ENCODE measurements at regions of chr11 and their contacts with region 1.

Region 1: DNA sequence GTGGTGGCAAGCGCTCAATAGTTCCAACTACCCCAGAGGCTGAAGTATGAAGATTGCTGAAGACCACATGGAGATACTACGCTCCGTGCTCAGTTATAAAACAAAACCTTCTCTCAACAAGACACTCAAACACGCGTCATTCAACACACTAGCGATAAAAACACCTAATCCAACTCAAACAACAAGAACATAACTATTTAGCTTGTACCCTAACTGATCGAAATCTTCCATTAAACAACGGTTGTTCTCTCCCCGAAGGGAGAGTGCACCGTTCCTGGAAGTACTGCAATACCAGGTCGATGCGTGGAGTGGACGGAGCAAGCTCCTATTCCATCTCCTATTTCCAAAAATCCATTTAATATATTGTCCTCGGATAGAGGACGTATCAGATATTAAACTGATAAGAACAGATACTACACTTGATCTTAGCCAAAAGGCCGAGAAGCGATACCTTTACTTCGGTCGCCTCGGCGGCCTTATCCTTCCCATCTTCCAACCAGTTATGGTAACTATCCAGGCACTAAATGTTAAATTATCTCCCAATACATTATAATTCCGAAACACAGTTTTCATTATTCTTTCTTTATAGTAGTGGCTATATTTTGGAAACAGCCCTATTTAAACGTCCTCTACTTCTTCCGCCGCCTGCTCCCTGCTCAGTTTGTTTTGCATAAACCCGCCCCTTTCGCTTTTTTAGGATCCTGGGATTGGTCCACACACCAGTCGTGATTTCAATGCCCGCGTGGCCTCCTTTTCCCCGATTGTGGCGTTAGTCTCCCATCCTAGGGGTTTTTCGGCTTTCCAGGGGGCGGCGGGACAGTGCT is 2.2 kb upstream of the WDR74 start:
- DNase-seq: peak; percentile 81
- ATAC-seq: peak; percentile 69
- H3K4me3 Mint-ChIP-seq: no peak overlapping the region
- H3K27ac Mint-ChIP-seq: no peak overlapping the region
- H3K4me1 Mint-ChIP-seq: peaks cover 20% of the 10 kb centered on the region
- H3K27me3 Mint-ChIP-seq: no peaks in the 10 kb centered on the region

Region 2: GRCh38 chr11:62621567-62622470 is 219.8 kb before region 1 on chr11 and contains the start of gene B3GAT3:
- POLR2A ChIA-PET with region 1: interaction called, 10 read pairs
- DNase-seq: peak; percentile 94
- ATAC-seq: peak; percentile 87
- H3K4me3 Mint-ChIP-seq: peak within 1 kb of the TSS; percentile 93
- H3K27ac Mint-ChIP-seq: peak within 1 kb of the TSS; percentile 99
- H3K4me1 Mint-ChIP-seq: peaks cover 24% of the 10 kb centered on the region
- H3K27me3 Mint-ChIP-seq: no peaks in the 10 kb centered on the region
- total RNA-seq, gene B3GAT3: 76.1 to 87.0 TPM

Region 3: DNA sequence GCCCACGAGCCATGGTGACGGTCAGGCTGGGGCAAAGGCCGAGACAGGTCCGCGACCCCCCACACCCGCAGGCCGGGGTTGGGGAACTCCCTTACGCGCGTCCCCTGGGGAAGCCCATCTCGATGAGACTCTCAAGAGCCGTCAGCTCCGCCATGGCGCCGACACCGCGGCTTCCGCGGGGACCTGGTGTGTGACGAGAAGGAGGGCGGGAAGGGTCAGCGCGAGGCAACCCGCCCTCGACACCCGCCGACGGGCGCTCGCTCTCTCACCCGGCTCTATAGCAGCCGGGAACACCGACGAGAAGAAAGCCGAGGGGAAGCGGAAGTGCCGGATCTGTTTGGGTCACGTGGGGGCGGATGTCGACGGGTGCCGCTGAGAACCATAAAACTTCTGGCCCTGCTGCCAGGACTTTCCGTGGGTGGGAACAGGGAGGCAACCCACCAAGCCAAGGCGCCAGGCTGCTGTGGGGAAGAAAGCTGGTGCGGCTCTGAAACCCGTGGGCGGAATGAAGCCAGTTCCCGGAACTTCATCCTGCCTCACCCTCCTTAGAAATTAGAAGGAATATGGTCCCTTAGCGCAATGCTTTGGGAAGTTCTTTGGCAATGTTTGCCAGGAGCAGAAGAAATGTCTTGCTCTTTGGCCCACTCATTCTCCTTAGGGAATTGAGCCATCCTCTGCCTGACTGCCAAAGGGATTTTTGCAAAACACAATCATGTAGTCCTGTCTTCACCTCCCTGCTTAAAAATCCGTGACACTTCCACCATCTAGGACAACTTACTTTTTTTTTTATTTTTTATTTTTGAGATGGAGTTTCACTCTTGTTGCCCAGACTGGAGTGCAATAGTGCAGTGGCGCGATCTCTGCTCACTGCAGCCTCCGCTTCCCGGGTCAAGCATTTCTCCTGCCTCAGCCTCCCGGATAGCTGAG is 162.5 kb before region 1 on chr11 and contains the start of gene UBXN1:
- POLR2A ChIA-PET with region 1: interaction called, 10 read pairs
- DNase-seq: peak; percentile 82
- ATAC-seq: peak; percentile 79
- H3K4me3 Mint-ChIP-seq: peak within 1 kb of the TSS; percentile 85
- H3K27ac Mint-ChIP-seq: peak within 1 kb of the TSS; percentile 88
- H3K4me1 Mint-ChIP-seq: peaks cover 20% of the 10 kb centered on the region
- H3K27me3 Mint-ChIP-seq: no peaks in the 10 kb centered on the region
- total RNA-seq, gene UBXN1: 135 to 136 TPM

Region 4: GRCh38 chr11:62771144-62772021 is 70.2 kb before region 1 on chr11 and contains the start of gene TAF6L:
- POLR2A ChIA-PET with region 1: interaction called, 46 read pairs
- DNase-seq: peak; percentile 95
- ATAC-seq: peak; percentile 83
- H3K4me3 Mint-ChIP-seq: peak within 1 kb of the TSS; percentile 92
- H3K27ac Mint-ChIP-seq: peak within 1 kb of the TSS; percentile 94
- H3K4me1 Mint-ChIP-seq: peaks cover 13% of the 10 kb centered on the region
- H3K27me3 Mint-ChIP-seq: no peaks in the 10 kb centered on the region
- total RNA-seq, gene TAF6L: 20.6 to 22.2 TPM

Region 5: GRCh38 chr11:62805076-62805892 is 36.3 kb before region 1 on chr11 and contains the start of gene NXF1:
- POLR2A ChIA-PET with region 1: interaction called, 98 read pairs
- DNase-seq: peak; percentile 100
- ATAC-seq: peak; percentile 83
- H3K4me3 Mint-ChIP-seq: peak within 1 kb of the TSS; percentile 99
- H3K27ac Mint-ChIP-seq: peak within 1 kb of the TSS; percentile 99
- H3K4me1 Mint-ChIP-seq: peaks cover 33% of the 10 kb centered on the region
- H3K27me3 Mint-ChIP-seq: no peaks in the 10 kb centered on the region
- total RNA-seq, gene NXF1: 124 to 131 TPM

Region 6: DNA sequence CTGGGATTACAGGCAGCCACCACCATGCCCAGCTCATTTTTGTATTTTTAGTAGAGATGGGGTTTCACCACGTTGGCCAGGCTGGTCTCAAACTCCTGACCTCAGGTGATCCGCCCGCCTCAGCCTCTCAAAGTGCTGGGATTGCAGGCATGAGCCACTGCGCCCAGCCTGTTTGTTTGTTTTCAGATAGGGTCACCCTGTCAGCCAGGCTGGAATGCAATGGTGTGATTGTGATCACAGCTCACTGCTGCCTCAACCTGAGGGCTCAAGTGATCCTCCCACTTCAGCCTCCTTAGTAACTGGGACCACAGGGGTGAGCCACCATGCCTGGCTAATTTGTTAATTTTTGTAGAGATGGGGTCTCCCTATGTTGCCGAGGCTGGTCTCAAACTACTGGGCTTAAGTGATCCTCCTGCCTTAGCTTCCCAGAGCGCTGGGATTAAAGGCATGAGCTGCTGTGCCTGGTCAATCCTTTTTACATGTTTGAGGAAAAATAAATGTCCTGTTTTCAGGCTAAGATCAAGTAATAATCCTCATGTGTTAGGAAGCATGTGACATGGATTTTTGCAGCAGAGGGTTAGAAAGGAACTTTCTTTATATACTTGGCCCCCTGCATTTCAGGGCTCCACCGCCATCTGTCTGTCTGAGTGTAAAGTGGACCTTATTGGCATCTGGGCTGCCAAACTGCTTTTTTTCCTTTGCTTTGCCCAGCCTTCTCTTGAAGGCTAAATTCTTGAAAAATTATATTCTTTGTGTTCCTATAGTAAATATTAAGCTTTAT is 34.3 kb after region 1 on chr11:
- POLR2A ChIA-PET with region 1: interaction called, 104 read pairs
- DNase-seq: no peak
- ATAC-seq: no peak
- H3K4me3 Mint-ChIP-seq: no peak overlapping the region
- H3K27ac Mint-ChIP-seq: no peak overlapping the region
- H3K4me1 Mint-ChIP-seq: peaks cover 14% of the 10 kb centered on the region
- H3K27me3 Mint-ChIP-seq: no peaks in the 10 kb centered on the region